GM12878 (cell line): ENCODE measurements at regions of chr20 and their contacts with region 1.

Region 1: DNA sequence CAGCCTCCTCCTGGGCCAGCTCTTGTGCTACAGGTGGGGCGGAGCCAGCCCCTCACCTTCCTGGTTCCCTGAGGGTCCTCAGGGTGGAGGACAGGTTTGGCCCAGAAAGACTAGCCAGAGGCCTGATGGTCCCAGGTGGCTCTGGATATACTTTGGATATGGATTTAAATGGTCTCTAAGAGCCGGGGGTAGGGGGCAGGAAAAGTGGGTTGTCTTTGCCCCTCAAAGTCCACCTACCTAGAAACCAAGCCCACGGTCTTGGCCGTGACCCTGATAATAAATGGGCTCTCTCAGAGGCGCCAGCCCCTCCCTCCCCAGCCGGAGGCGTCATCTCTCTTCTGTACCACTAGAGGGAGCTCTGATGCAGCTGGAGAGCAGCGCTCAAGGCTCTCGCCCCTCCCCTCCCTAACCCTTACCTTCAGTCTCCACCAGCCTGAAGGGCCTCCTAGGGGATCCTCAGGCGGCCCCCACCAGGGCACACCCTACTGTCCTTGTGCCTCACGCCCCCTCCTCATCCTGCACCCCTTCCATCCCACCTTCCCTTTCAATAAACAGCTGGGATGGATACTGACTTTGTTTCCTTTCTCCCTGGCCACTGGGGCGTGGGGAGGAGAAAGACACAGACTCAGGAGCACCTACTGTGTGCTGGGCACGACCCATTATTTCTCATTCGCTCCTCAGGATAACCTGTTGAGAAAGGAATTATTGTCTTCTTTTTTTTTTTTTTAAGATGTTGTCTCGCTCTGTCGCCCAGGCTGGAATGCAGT is 7.6 kb downstream of the NRSN2 start:
- DNase-seq: no peak
- ATAC-seq: peak; percentile 100
- H3K4me3 ChIP-seq: no peak overlapping the region
- H3K27ac ChIP-seq: no peak overlapping the region
- H3K4me1 ChIP-seq: no peaks in the 10 kb centered on the region
- H3K27me3 ChIP-seq: no peaks in the 10 kb centered on the region
- CTCF ChIP-seq: peak; percentile 92 to 98 (median 94)
- EP300 ChIP-seq: no peak
- POLR2A ChIP-seq: no peak
- RAD21 ChIP-seq: peak; percentile 95

Region 2: DNA sequence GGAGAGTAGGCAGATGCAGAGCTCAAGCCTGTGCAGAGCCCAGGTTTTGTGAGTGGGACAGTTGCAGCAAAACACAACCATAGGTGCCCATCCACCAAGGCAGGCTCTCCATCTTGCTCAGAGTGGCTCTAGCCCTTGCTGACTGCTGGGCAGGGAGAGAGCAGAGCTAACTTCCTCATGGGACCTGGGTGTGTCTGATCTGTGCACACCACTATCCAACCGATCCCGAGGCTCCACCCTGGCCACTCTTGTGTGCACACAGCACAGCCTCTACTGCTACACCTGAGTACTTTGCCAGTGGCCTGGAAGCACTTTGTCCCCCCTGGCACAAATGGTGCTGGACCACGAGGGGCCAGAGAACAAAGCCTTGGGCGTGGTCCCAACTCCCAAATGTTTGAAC is 274.9 kb before region 1 on chr20:
- CTCF ChIA-PET with region 1: no interaction called
- POLR2A ChIA-PET with region 1: no interaction called
- RAD21 ChIA-PET with region 1: no interaction called
- SMC1A ChIA-PET with region 1: no interaction called
- in situ Hi-C with region 1: no loop called
- intact Hi-C with region 1: no loop called
- DNase-seq: no peak
- ATAC-seq: no peak
- H3K4me3 ChIP-seq: no peak overlapping the region
- H3K27ac ChIP-seq: no peak overlapping the region
- H3K4me1 ChIP-seq: no peaks in the 10 kb centered on the region
- H3K27me3 ChIP-seq: no peaks in the 10 kb centered on the region; a peak in 1 of 4 replicates
- CTCF ChIP-seq: no peak
- EP300 ChIP-seq: no peak
- POLR2A ChIP-seq: no peak
- RAD21 ChIP-seq: no peak

Region 3: GRCh38 chr20:219290-220115 is 135.0 kb before region 1 on chr20:
- CTCF ChIA-PET with region 1: no interaction called
- POLR2A ChIA-PET with region 1: no interaction called
- RAD21 ChIA-PET with region 1: no interaction called
- SMC1A ChIA-PET with region 1: no interaction called
- in situ Hi-C with region 1: no loop called
- intact Hi-C with region 1: no loop called
- DNase-seq: no peak
- ATAC-seq: peak; percentile 65
- H3K4me3 ChIP-seq: no peak overlapping the region
- H3K27ac ChIP-seq: no peak overlapping the region
- H3K4me1 ChIP-seq: no peaks in the 10 kb centered on the region
- H3K27me3 ChIP-seq: no peaks in the 10 kb centered on the region
- CTCF ChIP-seq: peak; percentile 26 to 34 (median 29); a peak in 4 of 6 replicates
- EP300 ChIP-seq: no peak
- POLR2A ChIP-seq: no peak
- RAD21 ChIP-seq: peak; percentile 55

Region 4: GRCh38 chr20:389220-389619 is 34.7 kb after region 1 on chr20:
- CTCF ChIA-PET with region 1: no interaction called
- POLR2A ChIA-PET with region 1: no interaction called
- RAD21 ChIA-PET with region 1: no interaction called
- SMC1A ChIA-PET with region 1: no interaction called
- in situ Hi-C with region 1: no loop called
- intact Hi-C with region 1: no loop called
- DNase-seq: no peak
- ATAC-seq: no peak
- H3K4me3 ChIP-seq: no peak overlapping the region
- H3K27ac ChIP-seq: no peak overlapping the region
- H3K4me1 ChIP-seq: no peaks in the 10 kb centered on the region
- H3K27me3 ChIP-seq: no peaks in the 10 kb centered on the region
- CTCF ChIP-seq: no peak
- EP300 ChIP-seq: no peak
- POLR2A ChIP-seq: no peak
- RAD21 ChIP-seq: no peak

Region 5: DNA sequence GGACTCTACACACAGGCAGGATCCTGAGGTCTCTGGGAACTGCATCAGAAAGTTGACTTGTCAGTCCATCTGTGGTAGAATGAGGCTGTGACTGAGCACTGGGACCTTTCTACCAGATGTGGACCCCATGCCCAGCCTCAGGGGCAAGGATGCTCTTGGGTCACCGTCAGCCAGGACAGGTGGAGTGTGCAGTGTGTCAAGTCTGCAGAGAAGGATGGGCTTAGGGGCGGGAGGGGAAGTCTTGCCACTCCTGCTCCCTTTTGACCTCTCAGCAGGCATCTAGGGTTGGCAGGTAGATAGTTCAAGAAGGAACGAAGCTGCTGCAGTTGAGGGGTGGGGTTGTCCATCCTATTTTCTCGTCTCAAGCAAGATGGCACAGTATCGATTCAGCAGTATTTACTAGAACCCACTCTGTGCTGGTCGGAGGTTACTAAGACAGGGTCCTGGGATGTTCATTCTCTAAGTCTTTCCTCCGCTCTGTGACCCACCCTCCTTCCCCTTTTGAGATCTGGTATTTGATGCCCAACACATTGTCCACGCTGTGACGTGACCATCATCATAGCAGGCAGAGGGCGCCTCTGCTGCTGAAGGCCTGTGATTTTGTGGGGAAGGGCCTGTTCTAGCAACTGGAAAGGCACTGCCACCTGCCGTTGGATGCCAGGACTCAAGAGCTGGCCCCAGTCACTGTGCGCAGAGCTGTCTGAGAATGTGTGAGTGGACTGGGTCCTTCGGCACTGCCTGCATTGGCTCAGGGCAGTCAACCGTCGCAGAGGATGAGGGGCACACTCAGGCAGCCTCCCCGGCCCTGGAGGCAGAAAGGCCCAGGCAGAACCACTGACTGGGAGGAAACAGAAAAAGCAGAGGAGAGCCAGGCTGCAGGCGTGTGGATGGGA is 76.8 kb after region 1 on chr20:
- CTCF ChIA-PET with region 1: interaction called, 21 read pairs
- POLR2A ChIA-PET with region 1: no interaction called
- RAD21 ChIA-PET with region 1: interaction called, 10 read pairs
- SMC1A ChIA-PET with region 1: interaction called, 3 read pairs
- in situ Hi-C with region 1: no loop called
- intact Hi-C with region 1: loop called (anchors 1 kb)
- DNase-seq: no peak
- ATAC-seq: peak; percentile 65
- H3K4me3 ChIP-seq: no peak overlapping the region
- H3K27ac ChIP-seq: no peak overlapping the region
- H3K4me1 ChIP-seq: peaks cover 24% of the 10 kb centered on the region
- H3K27me3 ChIP-seq: no peaks in the 10 kb centered on the region
- CTCF ChIP-seq: peak; percentile 20 to 63 (median 63); a peak in 5 of 6 replicates
- EP300 ChIP-seq: no peak
- POLR2A ChIP-seq: peak; percentile 18
- RAD21 ChIP-seq: peak; percentile 15; the same call in 1 of the 2 replicates

Region 6: GRCh38 chr20:462199-462991 is 107.9 kb after region 1 on chr20 and contains the start of gene TBC1D20:
- CTCF ChIA-PET with region 1: interaction called, 3 read pairs
- POLR2A ChIA-PET with region 1: no interaction called
- RAD21 ChIA-PET with region 1: interaction called, 3 read pairs
- SMC1A ChIA-PET with region 1: no interaction called
- in situ Hi-C with region 1: no loop called
- intact Hi-C with region 1: loop called (anchors 5 kb)
- DNase-seq: peak; percentile 40
- ATAC-seq: peak; percentile 97
- H3K4me3 ChIP-seq: peak within 1 kb of the TSS; percentile 91
- H3K27ac ChIP-seq: peak within 1 kb of the TSS; percentile 55
- H3K4me1 ChIP-seq: peaks cover 5% of the 10 kb centered on the region
- H3K27me3 ChIP-seq: no peaks in the 10 kb centered on the region
- CTCF ChIP-seq: peak in 2 of 3 experiments; percentile 9 to 39; a peak in 1 of 6 replicates
- EP300 ChIP-seq: no peak
- POLR2A ChIP-seq: peak; percentile 80
- RAD21 ChIP-seq: no peak
- polyA plus RNA-seq, gene TBC1D20: 4.3 to 6.8 TPM

Region 7: DNA sequence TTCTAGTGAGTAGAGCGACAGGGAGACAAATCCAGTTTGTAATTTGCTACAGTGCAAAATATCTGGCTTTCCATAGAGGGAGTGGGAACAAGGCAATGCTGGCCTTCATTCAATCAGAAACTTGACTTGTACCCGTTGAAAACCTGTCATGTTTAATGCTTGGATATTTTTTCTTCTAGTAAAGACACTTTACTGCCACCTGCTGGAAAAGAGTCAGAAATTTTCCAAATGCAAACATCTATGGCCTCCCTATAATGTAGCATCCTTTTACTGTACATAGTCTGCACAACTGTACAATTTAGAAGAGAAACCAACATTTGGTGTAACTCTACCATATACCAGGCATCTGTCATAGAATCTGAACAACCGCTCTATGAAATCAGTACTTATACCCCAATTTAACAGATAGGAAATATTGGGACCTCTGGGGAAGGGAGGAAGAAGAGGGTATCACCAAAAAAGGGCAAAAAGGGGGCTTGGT is 124.5 kb after region 1 on chr20:
- CTCF ChIA-PET with region 1: interaction called, 41 read pairs
- POLR2A ChIA-PET with region 1: no interaction called
- RAD21 ChIA-PET with region 1: interaction called, 10 read pairs
- SMC1A ChIA-PET with region 1: interaction called, 6 read pairs
- in situ Hi-C with region 1: loop called (anchors 5 kb)
- intact Hi-C with region 1: loop called (anchors 1 kb)
- DNase-seq: no peak
- ATAC-seq: peak; percentile 87
- H3K4me3 ChIP-seq: no peak overlapping the region
- H3K27ac ChIP-seq: no peak overlapping the region
- H3K4me1 ChIP-seq: no peaks in the 10 kb centered on the region
- H3K27me3 ChIP-seq: no peaks in the 10 kb centered on the region
- CTCF ChIP-seq: peak; percentile 47 to 68 (median 57); a peak in 5 of 6 replicates
- EP300 ChIP-seq: no peak
- POLR2A ChIP-seq: no peak
- RAD21 ChIP-seq: peak; percentile 75

Region 8: GRCh38 chr20:543369-544152 is 189.1 kb after region 1 on chr20 and contains the start of gene CSNK2A1:
- CTCF ChIA-PET with region 1: interaction called, 3 read pairs
- POLR2A ChIA-PET with region 1: no interaction called
- RAD21 ChIA-PET with region 1: interaction called, 3 read pairs
- SMC1A ChIA-PET with region 1: no interaction called
- in situ Hi-C with region 1: no loop called
- intact Hi-C with region 1: loop called (anchors 2 kb)
- DNase-seq: peak; percentile 94
- ATAC-seq: peak; percentile 96
- H3K4me3 ChIP-seq: peak within 1 kb of the TSS; percentile 88
- H3K27ac ChIP-seq: peak within 1 kb of the TSS; percentile 90
- H3K4me1 ChIP-seq: peaks cover 8% of the 10 kb centered on the region; the same call in 1 of the 2 replicates
- H3K27me3 ChIP-seq: no peaks in the 10 kb centered on the region
- CTCF ChIP-seq: no peak
- EP300 ChIP-seq: no peak
- POLR2A ChIP-seq: peak; percentile 98
- RAD21 ChIP-seq: no peak
- polyA plus RNA-seq, gene CSNK2A1: 47.6 to 56.5 TPM

Region 9: DNA sequence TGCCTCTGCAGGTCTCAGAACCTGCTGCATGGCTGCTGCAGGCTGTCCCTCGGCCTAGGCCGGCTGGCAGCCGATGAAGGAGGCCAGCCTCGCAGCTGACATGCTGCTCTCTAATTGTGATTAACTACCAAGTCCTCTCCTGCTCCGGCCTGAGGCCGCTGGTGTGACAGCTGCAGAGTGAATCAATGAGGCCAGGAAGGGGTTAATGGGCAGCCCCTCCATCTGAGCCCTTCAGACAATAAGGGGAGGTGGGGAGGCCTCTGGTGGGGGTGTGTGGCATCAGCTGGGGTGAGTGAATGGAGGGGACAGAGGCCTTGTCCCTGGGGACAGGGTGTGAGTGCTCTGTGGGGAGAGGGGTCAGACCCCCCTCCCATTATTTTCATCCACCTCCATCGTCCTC is 379.4 kb after region 1 on chr20:
- CTCF ChIA-PET with region 1: interaction called, 8 read pairs
- POLR2A ChIA-PET with region 1: no interaction called
- RAD21 ChIA-PET with region 1: interaction called, 3 read pairs
- SMC1A ChIA-PET with region 1: no interaction called
- in situ Hi-C with region 1: loop called (anchors 10 kb)
- intact Hi-C with region 1: loop called (anchors 1 kb)
- DNase-seq: no peak
- ATAC-seq: no peak
- H3K4me3 ChIP-seq: no peak overlapping the region
- H3K27ac ChIP-seq: no peak overlapping the region
- H3K4me1 ChIP-seq: no peaks in the 10 kb centered on the region
- H3K27me3 ChIP-seq: peaks cover 0 to 4% of the 10 kb centered on the region in 2 experiments; a peak in 2 of 4 replicates
- CTCF ChIP-seq: no peak
- EP300 ChIP-seq: no peak
- POLR2A ChIP-seq: no peak
- RAD21 ChIP-seq: no peak

Region 10: DNA sequence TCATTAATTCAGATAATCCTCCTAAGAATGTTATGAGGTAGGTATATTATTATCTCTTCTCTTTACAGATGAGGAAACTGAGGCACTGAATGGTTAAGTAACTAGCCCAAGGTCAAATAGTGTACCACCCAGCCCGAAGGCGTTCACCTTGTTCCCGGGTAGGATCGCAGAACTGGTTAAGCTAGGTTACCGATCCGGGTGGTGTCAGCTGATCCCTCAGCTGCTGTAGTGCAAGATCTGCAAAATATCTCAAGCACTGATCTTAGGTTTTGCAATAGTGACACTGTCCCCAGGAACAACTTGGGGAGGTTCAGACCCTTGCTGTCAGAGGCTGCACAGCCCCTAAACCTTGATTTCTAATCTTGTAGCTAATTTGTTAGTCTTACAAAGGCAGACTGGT is 385.7 kb after region 1 on chr20:
- CTCF ChIA-PET with region 1: interaction called, 8 read pairs
- POLR2A ChIA-PET with region 1: interaction called, 3 read pairs
- RAD21 ChIA-PET with region 1: interaction called, 3 read pairs
- SMC1A ChIA-PET with region 1: no interaction called
- in situ Hi-C with region 1: loop called (anchors 10 kb)
- intact Hi-C with region 1: loop called (anchors 1 kb)
- DNase-seq: no peak
- ATAC-seq: no peak
- H3K4me3 ChIP-seq: no peak overlapping the region
- H3K27ac ChIP-seq: no peak overlapping the region
- H3K4me1 ChIP-seq: no peaks in the 10 kb centered on the region
- H3K27me3 ChIP-seq: peaks cover 0 to 2% of the 10 kb centered on the region in 2 experiments; a peak in 1 of 4 replicates
- CTCF ChIP-seq: no peak
- EP300 ChIP-seq: no peak
- POLR2A ChIP-seq: no peak
- RAD21 ChIP-seq: no peak